ENCODE measurements at regions of chr12 and their contacts with region 1.

Region 1: DNA sequence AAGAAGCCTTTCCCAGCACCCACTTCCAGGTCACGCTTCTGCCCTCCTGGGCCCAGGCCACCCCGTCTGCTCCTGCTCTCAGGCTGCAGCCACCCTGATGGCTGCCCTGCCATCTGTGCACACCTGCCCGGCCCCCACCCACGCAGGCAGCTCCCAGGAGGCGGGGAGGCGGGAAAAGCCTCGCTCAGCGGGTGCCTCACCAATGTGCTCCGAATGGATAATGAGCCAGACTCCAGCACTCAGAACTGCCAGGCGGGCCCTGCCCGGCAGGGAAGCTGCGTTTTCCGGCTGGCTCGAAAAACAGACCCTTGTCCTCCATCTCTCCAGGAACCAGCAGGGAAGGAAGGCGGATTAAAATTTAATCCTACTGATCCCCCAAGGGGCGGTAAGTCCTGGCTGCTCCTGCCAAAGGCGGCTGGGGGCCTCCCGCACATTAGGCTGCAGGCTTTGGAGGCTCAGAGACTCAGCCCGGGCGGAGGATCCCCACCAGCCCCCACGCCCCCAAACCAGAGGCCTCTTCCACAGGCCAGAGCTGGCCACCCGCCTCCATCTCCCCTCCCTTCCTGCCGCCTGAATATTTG is 104.0 kb downstream of the NCOR2 start:
- DNase-seq: no peak
- H3K4me3 ChIP-seq: no peak overlapping the region
- H3K27ac ChIP-seq: no peak overlapping the region
- H3K4me1 ChIP-seq: peaks cover 0 to 10% (median 5%) of the 10 kb centered on the region in 4 donors
- H3K27me3 ChIP-seq: no peaks in the 10 kb centered on the region
- CTCF ChIP-seq: no peak

Region 2: GRCh38 chr12:124497658-124498057 is 34.2 kb after region 1 on chr12:
- intact Hi-C with region 1: loop called (anchors 5 kb)
- DNase-seq: peak; percentile 75 to 87
- H3K4me3 ChIP-seq: no peak overlapping the region
- H3K27ac ChIP-seq: peak overlapping the region; percentile 30 to 46
- H3K4me1 ChIP-seq: peaks cover 0 to 83% (median 47%) of the 10 kb centered on the region in 4 donors
- H3K27me3 ChIP-seq: no peaks in the 10 kb centered on the region
- CTCF ChIP-seq: no peak

Region 3: GRCh38 chr12:124578445-124578844 is 115.0 kb after region 1 on chr12:
- intact Hi-C with region 1: no loop called
- DNase-seq: no peak
- H3K4me3 ChIP-seq: no peak overlapping the region
- H3K27ac ChIP-seq: no peak overlapping the region
- H3K4me1 ChIP-seq: peaks cover 0 to 12% (median 0%) of the 10 kb centered on the region in 4 donors
- H3K27me3 ChIP-seq: no peaks in the 10 kb centered on the region
- CTCF ChIP-seq: no peak

Measured in tibial artery (tissue), 4 donors.